ENCODE measurements at regions of chr2 and their contacts with region 1.

Region 1: GRCh38 chr2:50491541-50492476 is 540.1 kb downstream of the NRXN1 start:
- DNase-seq: peak; percentile 35

Region 2: DNA sequence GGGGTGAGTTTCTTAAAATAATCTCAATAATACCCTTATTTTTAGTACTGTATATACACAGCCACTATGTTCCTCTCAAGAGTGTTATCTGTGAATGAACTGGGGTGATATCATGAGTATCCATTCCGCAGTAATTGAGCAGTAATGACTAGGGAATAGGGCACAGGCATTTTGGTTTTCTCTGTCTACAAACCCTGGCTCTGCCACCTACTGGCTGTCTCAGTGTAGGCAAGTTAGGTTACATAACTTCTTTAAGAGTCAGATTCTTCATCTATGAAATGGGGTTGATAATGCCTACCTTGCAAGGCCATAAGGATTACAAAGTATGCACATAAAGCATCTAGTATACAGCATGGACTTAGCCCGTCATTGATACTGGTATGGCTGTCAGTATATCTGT is 15.6 kb before region 1 on chr2:
- CTCF ChIA-PET with region 1: interaction called, 12 read pairs
- POLR2A ChIA-PET with region 1: no interaction called
- DNase-seq: no peak

Region 3: GRCh38 chr2:50546790-50547189 is 55.0 kb after region 1 on chr2:
- CTCF ChIA-PET with region 1: no interaction called
- POLR2A ChIA-PET with region 1: no interaction called
- DNase-seq: no peak